ENCODE measurements at regions of chr7 and their contacts with region 1.

Region 1: GRCh38 chr7:24572997-24573625 is at the start of gene PALS2:
- DNase-seq: peak; percentile 75
- H3K4me3 Mint-ChIP-seq: peak within 1 kb of the TSS; percentile 96
- H3K27ac Mint-ChIP-seq: peak within 1 kb of the TSS; percentile 89
- H3K4me1 Mint-ChIP-seq: peaks cover 26% of the 10 kb centered on the region
- H3K27me3 Mint-ChIP-seq: peaks cover 45% of the 10 kb centered on the region
- total RNA-seq, gene PALS2: 30.6 and 35.2 TPM in 2 replicates

Region 2: GRCh38 chr7:23893942-23894891 is 678.9 kb before region 1 on chr7:
- intact Hi-C with region 1: loop called (anchors 10 kb)
- DNase-seq: peak; percentile 52
- H3K4me3 Mint-ChIP-seq: peak overlapping the region; percentile 34
- H3K27ac Mint-ChIP-seq: peak overlapping the region; percentile 91
- H3K4me1 Mint-ChIP-seq: peaks cover 36% of the 10 kb centered on the region
- H3K27me3 Mint-ChIP-seq: peaks cover 16% of the 10 kb centered on the region

Region 3: DNA sequence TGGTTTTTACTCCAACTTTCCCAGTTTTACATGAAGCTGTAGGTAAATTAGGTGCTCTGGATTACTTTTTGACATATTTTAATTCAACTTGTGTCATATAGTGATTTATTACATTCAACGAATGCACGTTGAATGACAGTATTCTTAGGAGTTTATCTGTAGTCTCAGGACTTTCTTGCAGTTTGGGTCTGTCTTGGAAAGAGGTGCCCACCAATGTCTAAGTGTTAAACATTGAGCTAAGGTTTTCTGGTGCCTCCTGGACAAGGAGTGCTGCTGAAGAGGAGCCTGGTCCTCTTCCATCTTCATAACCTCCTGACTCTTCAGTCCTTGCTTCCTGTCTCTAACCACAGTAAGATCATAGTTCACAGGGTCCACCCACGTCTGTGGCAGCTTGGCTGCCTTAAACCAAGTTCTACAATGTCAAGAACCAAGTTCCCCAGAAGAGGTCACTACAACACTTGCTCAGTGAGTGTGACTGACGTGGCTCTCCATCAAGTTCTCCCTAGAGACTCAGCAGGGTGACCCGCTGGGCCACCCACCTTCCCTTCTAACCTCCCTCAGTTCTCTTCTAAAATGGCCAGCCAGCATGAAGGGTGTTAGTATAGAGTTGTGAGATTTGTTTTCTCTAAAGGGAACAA is 283.0 kb before region 1 on chr7:
- intact Hi-C with region 1: loop called (anchors 5 kb)
- DNase-seq: peak; percentile 32
- H3K4me3 Mint-ChIP-seq: no peak overlapping the region
- H3K27ac Mint-ChIP-seq: no peak overlapping the region
- H3K4me1 Mint-ChIP-seq: peaks cover 8% of the 10 kb centered on the region
- H3K27me3 Mint-ChIP-seq: peaks cover 57% of the 10 kb centered on the region

Region 4: DNA sequence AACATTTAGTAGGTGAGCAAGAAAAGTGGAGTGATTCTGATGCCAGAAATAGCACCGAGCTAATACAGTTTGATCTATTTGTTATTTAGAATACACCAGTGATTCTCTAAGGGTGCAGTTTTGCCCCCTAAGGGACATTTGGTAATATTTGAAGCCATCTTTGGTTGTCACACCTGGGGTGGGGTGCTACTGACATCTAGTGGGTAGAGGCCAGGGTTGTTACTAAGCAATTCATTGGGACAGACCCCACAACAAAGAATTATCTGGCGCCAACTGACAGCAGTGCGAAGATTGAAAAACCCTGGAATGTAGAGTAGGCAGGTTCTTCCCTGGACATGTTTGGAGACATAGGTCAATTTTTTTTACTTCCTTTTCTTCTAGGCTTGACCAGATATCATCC is 14.7 kb after region 1 on chr7:
- intact Hi-C with region 1: loop called (anchors 1 kb)
- DNase-seq: no peak
- H3K4me3 Mint-ChIP-seq: no peak overlapping the region
- H3K27ac Mint-ChIP-seq: no peak overlapping the region
- H3K4me1 Mint-ChIP-seq: peaks cover 38% of the 10 kb centered on the region
- H3K27me3 Mint-ChIP-seq: peaks cover 2% of the 10 kb centered on the region

Region 5: GRCh38 chr7:24665564-24666294 is 92.6 kb after region 1 on chr7:
- intact Hi-C with region 1: loop called (anchors 1 kb)
- DNase-seq: peak; percentile 12
- H3K4me3 Mint-ChIP-seq: no peak overlapping the region
- H3K27ac Mint-ChIP-seq: no peak overlapping the region
- H3K4me1 Mint-ChIP-seq: peaks cover 9% of the 10 kb centered on the region
- H3K27me3 Mint-ChIP-seq: no peaks in the 10 kb centered on the region

Region 6: GRCh38 chr7:25093268-25093826 is 520.2 kb after region 1 on chr7:
- intact Hi-C with region 1: loop called (anchors 5 kb)
- DNase-seq: peak; percentile 66
- H3K4me3 Mint-ChIP-seq: no peak overlapping the region
- H3K27ac Mint-ChIP-seq: no peak overlapping the region
- H3K4me1 Mint-ChIP-seq: peaks cover 16% of the 10 kb centered on the region
- H3K27me3 Mint-ChIP-seq: peaks cover 9% of the 10 kb centered on the region